ENCODE measurements at regions of chr17 and their contacts with region 1.

Region 1: GRCh38 chr17:18203308-18203707 is 19.7 kb downstream of the ALKBH5 start:
- DNase-seq: no peak
- H3K4me3 ChIP-seq: no peak overlapping the region
- H3K27ac ChIP-seq: no peak overlapping the region
- H3K4me1 ChIP-seq: peaks cover 4% of the 10 kb centered on the region
- H3K27me3 ChIP-seq: no peaks in the 10 kb centered on the region
- CTCF ChIP-seq: no peak
- EP300 ChIP-seq: no peak
- POLR2A ChIP-seq: no peak

Region 2: DNA sequence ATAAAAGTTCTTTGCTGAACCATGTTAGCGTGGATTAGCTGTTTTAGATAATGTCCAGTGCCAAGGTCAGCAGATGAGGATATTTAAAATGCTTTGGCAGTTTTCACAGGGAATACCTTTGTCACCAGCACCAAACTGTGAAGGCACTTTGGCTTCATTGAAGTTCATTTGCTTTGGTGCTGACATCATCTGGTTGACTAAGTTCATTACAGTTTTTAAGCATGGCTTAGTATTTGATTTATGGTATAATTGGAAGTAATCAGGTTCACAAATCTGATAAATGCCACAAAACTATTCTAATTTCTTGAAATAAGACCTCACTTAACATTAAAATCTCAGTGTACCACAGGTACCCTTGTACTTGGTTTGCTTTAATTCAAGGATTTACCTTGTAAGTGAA is 159.8 kb before region 1 on chr17:
- intact Hi-C with region 1: no loop called
- DNase-seq: no peak
- H3K4me3 ChIP-seq: no peak overlapping the region
- H3K27ac ChIP-seq: no peak overlapping the region
- H3K4me1 ChIP-seq: peaks cover 7% of the 10 kb centered on the region
- H3K27me3 ChIP-seq: no peaks in the 10 kb centered on the region
- CTCF ChIP-seq: no peak
- EP300 ChIP-seq: no peak
- POLR2A ChIP-seq: no peak

Region 3: GRCh38 chr17:18217412-18218015 is 14.2 kb after region 1 on chr17:
- intact Hi-C with region 1: no loop called
- DNase-seq: peak; percentile 64 to 87 (median 80)
- H3K4me3 ChIP-seq: no peak overlapping the region
- H3K27ac ChIP-seq: no peak overlapping the region
- H3K4me1 ChIP-seq: no peaks in the 10 kb centered on the region
- H3K27me3 ChIP-seq: no peaks in the 10 kb centered on the region
- CTCF ChIP-seq: peak; percentile 69 to 76 (median 76)
- EP300 ChIP-seq: no peak
- POLR2A ChIP-seq: no peak

Region 4: GRCh38 chr17:18278867-18279266 is 75.6 kb after region 1 on chr17:
- intact Hi-C with region 1: loop called in 1 of 4 experiments (anchors 10 kb)
- DNase-seq: no peak
- H3K4me3 ChIP-seq: no peak overlapping the region
- H3K27ac ChIP-seq: no peak overlapping the region
- H3K4me1 ChIP-seq: no peaks in the 10 kb centered on the region
- H3K27me3 ChIP-seq: no peaks in the 10 kb centered on the region
- CTCF ChIP-seq: no peak
- EP300 ChIP-seq: no peak
- POLR2A ChIP-seq: no peak

Measured in ovary (tissue), 10 donors.